Activated naive CD4-positive, alpha-beta T cell treated with anti-CD3 and anti-CD28 coated beads for 36 hours (primary cell): ENCODE measurements at regions of chr1 and their contacts with region 1.

Region 1: GRCh38 chr1:2545759-2546514 is 10.2 kb upstream of the TNFRSF14 start:
- DNase-seq: peak; percentile 87
- H3K4me3 Mint-ChIP-seq: peak overlapping the region; percentile 81
- H3K27ac Mint-ChIP-seq: no peak overlapping the region
- H3K4me1 Mint-ChIP-seq: peaks cover 19% of the 10 kb centered on the region
- H3K27me3 Mint-ChIP-seq: no peaks in the 10 kb centered on the region

Region 2: DNA sequence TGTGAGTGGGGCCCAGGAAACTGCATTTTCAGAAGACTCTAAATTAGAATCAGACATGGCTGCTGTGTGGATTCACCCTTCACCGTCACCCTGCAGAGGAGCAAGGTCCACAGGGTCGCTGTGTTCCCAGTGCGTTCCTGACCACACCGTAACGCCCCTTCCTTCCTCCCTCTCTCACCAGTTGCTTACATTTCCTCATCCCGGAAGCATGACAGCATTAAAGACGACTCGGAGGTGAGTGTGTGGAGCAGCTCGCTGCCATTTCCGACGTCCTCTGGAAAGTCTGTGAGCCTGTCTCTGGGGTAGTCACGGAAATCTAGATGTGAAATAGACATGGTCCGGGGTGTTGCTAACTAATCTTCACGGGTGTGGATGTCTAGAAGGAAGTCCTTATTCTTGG is 397.2 kb before region 1 on chr1:
- CTCF ChIA-PET with region 1: no interaction called
- intact Hi-C with region 1: loop called (anchors 2 kb)
- DNase-seq: peak; percentile 79
- H3K4me3 Mint-ChIP-seq: no peak overlapping the region
- H3K27ac Mint-ChIP-seq: no peak overlapping the region
- H3K4me1 Mint-ChIP-seq: peaks cover 12% of the 10 kb centered on the region
- H3K27me3 Mint-ChIP-seq: no peaks in the 10 kb centered on the region

Region 3: DNA sequence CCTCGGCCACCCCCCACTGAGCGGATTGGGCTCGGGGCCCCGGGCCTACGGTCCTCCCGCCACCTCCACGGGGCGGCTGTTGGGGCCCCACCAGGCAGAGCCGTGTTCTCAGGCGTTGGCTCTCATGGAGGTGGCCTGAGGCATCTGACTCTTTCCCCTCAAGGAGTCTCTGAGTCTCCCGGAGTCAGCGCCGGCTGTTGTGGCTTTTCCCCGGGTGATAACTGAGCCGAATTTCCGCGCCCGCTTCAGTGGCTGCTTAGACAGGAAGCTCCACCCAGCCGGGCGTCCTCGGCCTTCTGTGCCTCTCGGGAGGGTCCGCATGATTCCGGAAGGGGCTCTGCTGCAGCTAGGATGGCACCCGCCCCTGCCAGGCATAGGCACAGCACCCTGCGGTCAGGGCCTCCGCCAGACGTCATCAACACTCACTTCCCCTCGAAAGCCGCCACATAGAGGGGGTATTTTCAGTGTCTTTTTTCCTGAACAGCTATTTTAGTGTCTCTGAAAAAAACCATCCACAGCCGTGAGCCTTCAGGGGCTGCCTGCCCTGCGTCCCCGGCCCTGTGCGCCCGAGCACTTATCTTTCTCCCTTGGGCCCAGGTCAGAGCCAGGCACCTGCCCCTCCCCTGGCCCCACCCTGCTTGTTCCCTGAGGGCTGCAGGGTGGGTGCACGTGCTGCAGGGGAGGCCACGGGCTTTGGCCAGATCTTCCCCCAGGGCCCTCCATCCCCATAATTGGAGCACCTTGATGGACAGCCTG is 244.9 kb before region 1 on chr1:
- CTCF ChIA-PET with region 1: no interaction called
- intact Hi-C with region 1: loop called (anchors 5 kb)
- DNase-seq: peak; percentile 96
- H3K4me3 Mint-ChIP-seq: peak overlapping the region; percentile 77
- H3K27ac Mint-ChIP-seq: peak overlapping the region; percentile 98
- H3K4me1 Mint-ChIP-seq: peaks cover 60% of the 10 kb centered on the region
- H3K27me3 Mint-ChIP-seq: no peaks in the 10 kb centered on the region

Region 4: DNA sequence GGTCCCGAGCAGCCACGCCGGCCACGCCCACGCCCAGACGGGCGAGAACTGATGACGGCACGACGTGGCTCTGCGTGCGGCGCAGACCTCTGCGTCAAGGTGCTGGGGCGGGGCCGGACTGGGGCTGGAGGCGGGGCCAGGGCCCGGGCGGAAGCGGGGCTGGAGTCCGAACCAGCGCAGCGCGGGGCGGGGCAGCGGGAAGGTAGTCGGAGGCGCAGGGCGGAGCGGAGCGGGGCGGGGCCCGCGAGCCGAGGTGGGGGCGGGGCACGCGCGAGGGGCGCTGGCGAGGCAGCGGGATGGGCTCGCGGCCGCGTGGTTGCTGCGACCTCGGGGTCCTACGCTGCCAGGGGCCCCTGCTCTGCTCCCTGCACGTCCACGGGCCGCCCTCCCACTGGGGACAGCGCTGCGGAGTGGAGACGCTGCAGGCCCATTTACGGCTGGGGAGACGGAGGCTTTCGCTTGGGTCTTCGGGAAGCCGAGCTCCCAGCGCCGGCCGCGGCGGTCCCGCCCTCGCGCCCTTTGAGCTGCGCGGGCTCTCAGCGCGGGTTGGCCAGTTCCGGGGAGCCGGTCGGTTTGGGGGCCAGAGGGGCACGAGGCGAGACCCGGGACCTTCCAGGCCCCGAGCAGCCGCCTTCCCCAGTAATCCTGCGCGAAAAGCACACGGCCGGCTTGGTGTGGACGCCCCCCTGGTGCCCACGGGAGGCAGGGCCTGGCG is 133.3 kb before region 1 on chr1 and contains the start of gene PEX10:
- CTCF ChIA-PET with region 1: interaction called, 19 read pairs
- intact Hi-C with region 1: loop called (anchors 1 kb)
- DNase-seq: peak; percentile 99
- H3K4me3 Mint-ChIP-seq: peak within 1 kb of the TSS; percentile 84
- H3K27ac Mint-ChIP-seq: peak within 1 kb of the TSS; percentile 77
- H3K4me1 Mint-ChIP-seq: peaks cover 37% of the 10 kb centered on the region
- H3K27me3 Mint-ChIP-seq: no peaks in the 10 kb centered on the region
- total RNA-seq, gene PEX10: 8.6 to 9.1 TPM

Region 5: GRCh38 chr1:2525920-2526823 is 19.8 kb before region 1 on chr1 and contains the start of gene PANK4:
- CTCF ChIA-PET with region 1: interaction called, 10 read pairs
- intact Hi-C with region 1: loop called (anchors 1 kb)
- DNase-seq: peak; percentile 90
- H3K4me3 Mint-ChIP-seq: peak within 1 kb of the TSS; percentile 87
- H3K27ac Mint-ChIP-seq: peak within 1 kb of the TSS; percentile 97
- H3K4me1 Mint-ChIP-seq: peaks cover 47% of the 10 kb centered on the region
- H3K27me3 Mint-ChIP-seq: peaks cover 3% of the 10 kb centered on the region
- total RNA-seq, gene PANK4: 46.6 to 51.4 TPM

Region 6: DNA sequence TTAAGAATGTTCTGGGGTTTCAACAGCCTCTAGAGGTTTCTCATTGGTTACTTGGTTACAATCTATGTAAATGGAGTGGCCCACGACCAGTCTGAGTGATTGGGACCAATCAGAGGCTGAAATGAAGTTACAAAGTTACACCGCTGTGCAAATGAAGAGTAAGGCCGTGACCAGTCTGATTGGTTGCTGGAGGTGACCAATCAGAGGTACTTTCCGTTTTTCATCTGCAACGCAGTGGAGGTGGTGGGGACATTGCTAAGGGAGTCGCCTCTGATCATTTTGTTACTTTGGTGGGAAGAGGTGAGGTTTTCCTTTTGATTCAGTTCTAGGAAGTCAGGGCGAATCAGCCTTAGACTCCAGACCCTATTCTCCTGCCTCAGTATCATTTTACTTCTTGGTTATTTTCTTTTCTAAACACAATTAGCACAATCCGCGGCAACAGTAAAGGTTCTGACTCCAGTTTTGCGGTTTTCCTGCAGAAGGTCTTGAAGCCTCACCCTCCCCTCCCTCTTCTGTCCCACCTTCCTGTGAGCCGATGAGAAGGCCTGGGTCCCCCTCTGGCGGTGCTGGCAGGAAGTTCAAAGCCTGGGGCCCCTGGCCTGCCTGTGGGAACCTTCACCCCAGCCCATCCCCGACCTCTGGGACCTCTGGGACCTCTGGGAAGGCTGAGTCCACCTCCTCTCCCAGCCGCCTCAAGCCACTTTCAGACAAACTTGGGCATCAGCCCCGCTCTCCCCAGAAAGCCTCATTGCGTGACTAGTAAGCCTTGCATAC is 294.3 kb after region 1 on chr1:
- CTCF ChIA-PET with region 1: no interaction called
- intact Hi-C with region 1: loop called (anchors 5 kb)
- DNase-seq: peak; percentile 80
- H3K4me3 Mint-ChIP-seq: peak overlapping the region; percentile 72
- H3K27ac Mint-ChIP-seq: peak overlapping the region; percentile 73
- H3K4me1 Mint-ChIP-seq: peaks cover 16% of the 10 kb centered on the region
- H3K27me3 Mint-ChIP-seq: no peaks in the 10 kb centered on the region